ENCODE measurements at regions of chr20 and their contacts with region 1.

Region 1: DNA sequence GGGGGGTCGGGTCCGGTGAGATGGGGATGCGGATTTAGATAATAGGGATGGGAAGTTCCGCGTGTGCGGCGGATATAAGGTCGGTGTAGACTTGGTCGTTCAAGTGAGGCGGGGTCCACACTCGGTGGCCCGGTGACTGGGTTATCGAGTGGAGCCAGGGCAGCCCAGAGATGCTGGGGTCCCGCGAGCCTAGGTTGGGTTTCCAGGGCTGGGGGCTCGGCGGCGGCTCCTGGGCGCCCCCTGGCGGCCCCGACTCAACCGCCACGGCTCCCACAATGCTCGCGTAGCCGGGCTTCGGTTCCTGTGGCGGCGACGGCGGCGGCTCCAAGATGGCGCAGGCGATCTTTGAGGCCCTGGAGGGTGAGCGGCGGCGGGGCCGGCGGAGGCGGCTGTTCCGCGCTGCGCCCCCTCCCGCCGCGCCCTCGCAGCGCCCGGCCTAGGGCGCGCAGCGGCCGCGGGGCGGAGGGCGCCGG is at the start of gene ZNF341:
- DNase-seq: peak; percentile 85 to 89 (median 87)
- H3K4me3 ChIP-seq: peak within 1 kb of the TSS; percentile 50 to 86 (median 86)
- H3K4me3 Mint-ChIP-seq: peak within 1 kb of the TSS; percentile 85 to 96
- H3K27ac ChIP-seq: peak within 1 kb of the TSS; percentile 83 to 84
- H3K27ac Mint-ChIP-seq: peak within 1 kb of the TSS; percentile 88 to 97 (median 95)
- H3K4me1 ChIP-seq: peaks cover 35 to 42% of the 10 kb centered on the region in 2 donors
- H3K4me1 Mint-ChIP-seq: peaks cover 34% of the 10 kb centered on the region
- H3K27me3 ChIP-seq: no peaks in the 10 kb centered on the region
- H3K27me3 Mint-ChIP-seq: peaks cover 0 to 2% (median 2%) of the 10 kb centered on the region in 3 donors
- CTCF ChIP-seq: peak; percentile 92
- polyA plus RNA-seq, gene ZNF341: 1.1 to 10.3 (median 2.3) TPM

Region 2: DNA sequence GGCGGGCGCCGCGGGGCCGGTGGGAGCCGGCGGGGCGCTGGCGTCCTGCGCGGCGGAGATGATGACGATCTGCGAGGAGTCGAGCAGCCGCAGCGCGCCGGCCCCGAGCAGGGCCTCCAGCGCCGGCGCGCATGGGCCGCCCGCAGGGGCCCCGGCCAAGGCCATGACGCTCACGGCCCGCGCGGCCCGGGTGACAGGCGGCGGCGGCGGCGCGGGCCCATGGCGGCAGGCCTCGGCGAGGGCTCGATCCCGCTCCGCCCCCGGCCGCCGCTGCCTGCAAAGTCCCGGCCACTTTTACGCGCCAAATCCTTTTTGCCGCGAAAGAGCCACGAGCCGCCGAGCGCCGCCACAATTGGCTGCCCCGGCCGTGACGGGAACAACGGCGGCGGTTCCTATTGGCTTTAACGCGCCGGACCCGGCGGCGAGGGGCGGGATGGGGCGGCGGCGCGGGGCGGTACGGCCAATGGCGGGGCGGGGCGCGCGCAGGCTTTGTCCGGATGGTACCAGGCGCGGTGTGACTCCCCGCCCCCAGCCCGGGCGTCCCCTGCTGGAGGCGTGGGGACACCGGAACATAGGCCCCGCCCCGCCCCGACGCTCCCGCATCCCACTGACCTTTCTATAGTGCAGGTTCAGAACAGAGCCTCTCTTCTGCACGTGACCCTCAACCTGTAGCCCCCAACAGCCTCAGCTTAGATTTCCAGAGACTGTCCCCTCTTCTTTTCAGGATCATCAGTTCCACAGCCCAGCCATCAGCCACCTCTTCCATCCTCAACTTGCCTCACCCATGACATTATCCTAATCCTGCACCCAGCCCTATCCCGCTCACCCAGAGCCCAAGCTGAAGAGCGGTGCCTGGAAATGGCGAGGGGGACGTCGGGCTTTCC is 45.4 kb before region 1 on chr20 and contains the start of gene E2F1:
- intact Hi-C with region 1: loop called in 1 of 2 experiments (anchors 10 kb)
- DNase-seq: peak; percentile 86 to 93 (median 89)
- H3K4me3 ChIP-seq: peak within 1 kb of the TSS; percentile 10 to 72 (median 32)
- H3K4me3 Mint-ChIP-seq: peak within 1 kb of the TSS; percentile 79 to 94
- H3K27ac ChIP-seq: peak within 1 kb of the TSS in 1 of 2 donors; percentile 52
- H3K27ac Mint-ChIP-seq: peak within 1 kb of the TSS; percentile 73 to 92 (median 86)
- H3K4me1 ChIP-seq: peaks cover 30 to 50% of the 10 kb centered on the region in 2 donors
- H3K4me1 Mint-ChIP-seq: peaks cover 51% of the 10 kb centered on the region
- H3K27me3 ChIP-seq: no peaks in the 10 kb centered on the region
- H3K27me3 Mint-ChIP-seq: peaks cover 0 to 2% (median 0%) of the 10 kb centered on the region in 3 donors
- CTCF ChIP-seq: peak; percentile 26
- polyA plus RNA-seq, gene E2F1: 0.17 to 1.1 TPM in 2 of 3 donors, not detected in the other

Region 3: DNA sequence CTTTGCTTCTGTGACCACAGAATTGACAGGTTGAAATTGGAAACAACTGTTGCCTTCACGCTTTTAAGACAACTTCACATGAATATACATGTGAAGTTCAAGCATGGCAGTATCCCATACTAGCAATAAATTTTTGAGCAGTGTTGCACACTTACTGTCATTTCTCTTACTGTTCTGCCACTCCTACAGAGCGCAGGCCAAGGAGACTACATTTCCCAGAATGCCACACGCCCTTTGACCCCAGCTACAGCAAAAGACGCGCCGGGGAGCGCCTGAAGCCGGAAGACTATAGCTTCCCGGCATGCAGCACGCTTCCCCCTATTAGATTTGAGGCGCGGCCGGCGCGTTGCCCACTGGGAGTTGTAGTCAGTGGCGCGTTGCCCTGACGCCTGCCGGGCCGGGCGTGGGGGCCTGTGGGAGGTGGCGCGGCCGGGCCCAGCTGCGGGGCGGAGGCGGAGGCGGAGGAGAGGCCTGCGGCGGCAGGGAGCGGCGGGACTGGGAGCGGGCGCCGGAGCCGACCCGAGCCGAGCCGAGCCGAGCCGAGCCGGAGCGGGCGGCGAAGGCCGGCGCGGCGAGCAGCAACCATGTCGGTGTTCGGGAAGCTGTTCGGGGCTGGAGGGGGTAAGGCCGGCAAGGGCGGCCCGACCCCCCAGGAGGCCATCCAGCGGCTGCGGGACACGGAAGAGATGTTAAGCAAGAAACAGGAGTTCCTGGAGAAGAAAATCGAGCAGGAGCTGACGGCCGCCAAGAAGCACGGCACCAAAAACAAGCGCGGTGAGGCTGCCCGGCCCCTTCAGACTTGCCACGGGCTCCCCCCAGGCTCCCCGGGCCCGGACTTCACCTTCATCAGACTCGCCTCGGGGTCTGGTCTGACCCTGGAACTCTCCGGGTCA is 79.4 kb after region 1 on chr20 and contains the start of gene CHMP4B:
- intact Hi-C with region 1: loop called in 1 of 2 experiments (anchors 5 kb)
- DNase-seq: peak; percentile 98 to 99 (median 98)
- H3K4me3 ChIP-seq: peak within 1 kb of the TSS; percentile 82 to 90 (median 90)
- H3K4me3 Mint-ChIP-seq: peak within 1 kb of the TSS; percentile 96 to 98
- H3K27ac ChIP-seq: peak within 1 kb of the TSS; percentile 100
- H3K27ac Mint-ChIP-seq: peak within 1 kb of the TSS; percentile 100
- H3K4me1 ChIP-seq: peaks cover 52 to 60% of the 10 kb centered on the region in 2 donors
- H3K4me1 Mint-ChIP-seq: peaks cover 57% of the 10 kb centered on the region
- H3K27me3 ChIP-seq: no peaks in the 10 kb centered on the region
- H3K27me3 Mint-ChIP-seq: peaks cover 0 to 2% (median 0%) of the 10 kb centered on the region in 3 donors
- CTCF ChIP-seq: no peak
- polyA plus RNA-seq, gene CHMP4B: 7.1 to 181 (median 10.0) TPM